CD4-positive, alpha-beta memory T cell (primary cell): ENCODE measurements at regions of chr22 and their contacts with region 1.

Region 1: GRCh38 chr22:24845041-24845898 is 39.3 kb downstream of the SGSM1 start:
- DNase-seq: no peak
- H3K4me3 ChIP-seq: no peak overlapping the region
- H3K4me3 Mint-ChIP-seq: peak overlapping the region in 2 of 8 donors; percentile 6 to 34
- H3K27ac ChIP-seq: no peak overlapping the region
- H3K27ac Mint-ChIP-seq: peak overlapping the region in 1 of 7 donors; percentile 32
- H3K4me1 ChIP-seq: no peaks in the 10 kb centered on the region
- H3K4me1 Mint-ChIP-seq: peaks cover 3 to 19% (median 14%) of the 10 kb centered on the region in 4 donors
- H3K27me3 ChIP-seq: no peaks in the 10 kb centered on the region
- H3K27me3 Mint-ChIP-seq: no peaks in the 10 kb centered on the region

Region 2: DNA sequence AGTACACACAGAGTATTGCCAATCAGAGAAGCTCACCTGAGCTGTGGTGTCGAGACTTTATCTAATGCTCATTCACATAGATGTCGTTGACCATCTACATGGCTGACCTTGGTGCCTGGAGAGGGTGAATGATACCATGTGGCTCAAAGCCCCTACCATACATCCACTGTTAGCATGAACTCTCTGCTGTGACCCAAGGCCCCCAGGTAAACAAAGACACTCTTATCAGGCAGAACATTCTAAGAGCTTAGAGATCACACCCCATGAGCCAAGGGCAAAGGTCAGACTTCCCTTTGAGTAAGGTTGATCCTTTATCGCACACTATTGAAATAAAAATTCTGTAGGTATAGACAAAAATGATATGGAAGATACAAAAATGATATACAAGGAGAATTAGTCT is 55.8 kb before region 1 on chr22:
- CTCF ChIA-PET with region 1: interaction called, 10 read pairs
- POLR2A ChIA-PET with region 1: no interaction called
- intact Hi-C with region 1: no loop called
- DNase-seq: no peak
- H3K4me3 ChIP-seq: no peak overlapping the region
- H3K4me3 Mint-ChIP-seq: no peak overlapping the region
- H3K27ac ChIP-seq: no peak overlapping the region
- H3K27ac Mint-ChIP-seq: no peak overlapping the region
- H3K4me1 ChIP-seq: no peaks in the 10 kb centered on the region
- H3K4me1 Mint-ChIP-seq: no peaks in the 10 kb centered on the region
- H3K27me3 ChIP-seq: no peaks in the 10 kb centered on the region
- H3K27me3 Mint-ChIP-seq: no peaks in the 10 kb centered on the region

Region 3: GRCh38 chr22:24894220-24894975 is 49.1 kb after region 1 on chr22:
- CTCF ChIA-PET with region 1: no interaction called
- POLR2A ChIA-PET with region 1: no interaction called
- intact Hi-C with region 1: no loop called
- DNase-seq: no peak
- H3K4me3 ChIP-seq: no peak overlapping the region
- H3K4me3 Mint-ChIP-seq: no peak overlapping the region
- H3K27ac ChIP-seq: no peak overlapping the region
- H3K27ac Mint-ChIP-seq: peak overlapping the region in 1 of 7 donors; percentile 69
- H3K4me1 ChIP-seq: no peaks in the 10 kb centered on the region
- H3K4me1 Mint-ChIP-seq: no peaks in the 10 kb centered on the region
- H3K27me3 ChIP-seq: no peaks in the 10 kb centered on the region
- H3K27me3 Mint-ChIP-seq: no peaks in the 10 kb centered on the region